Posterior vena cava (tissue), 2 donors: ENCODE measurements at regions of chr9 and their contacts with region 1.

Region 1: DNA sequence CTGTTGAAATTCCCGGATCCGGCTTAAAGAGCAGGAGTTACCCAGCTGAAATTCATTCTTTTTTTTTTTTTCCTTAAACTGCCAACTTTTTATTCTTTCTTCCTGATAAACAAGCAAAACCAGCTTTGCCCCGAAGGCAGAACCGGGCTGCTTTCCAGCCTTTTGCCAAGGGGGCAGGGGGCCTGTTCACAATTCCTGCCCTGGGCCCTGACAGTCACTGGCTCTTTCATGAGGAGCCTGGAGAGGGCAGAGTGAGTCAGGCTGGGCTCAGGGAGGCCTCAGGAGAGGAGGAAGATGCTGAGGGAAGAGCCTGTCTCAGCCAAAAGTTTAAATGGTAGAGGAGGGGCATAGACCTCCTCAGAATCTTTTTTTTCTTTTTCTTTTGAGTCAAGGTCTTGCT is 4.8 kb downstream of the GLIPR2 start:
- DNase-seq: peak; percentile 82

Region 2: GRCh38 chr9:36190388-36191287 is 49.4 kb after region 1 on chr9 and contains the start of gene CLTA:
- intact Hi-C with region 1: loop called in 1 of 2 experiments (anchors 1 kb)
- DNase-seq: peak; percentile 98
- total RNA-seq, gene CLTA: 109 to 135 TPM